PC-9 (cell line): ENCODE measurements at regions of chr9 and their contacts with region 1.

Region 1: DNA sequence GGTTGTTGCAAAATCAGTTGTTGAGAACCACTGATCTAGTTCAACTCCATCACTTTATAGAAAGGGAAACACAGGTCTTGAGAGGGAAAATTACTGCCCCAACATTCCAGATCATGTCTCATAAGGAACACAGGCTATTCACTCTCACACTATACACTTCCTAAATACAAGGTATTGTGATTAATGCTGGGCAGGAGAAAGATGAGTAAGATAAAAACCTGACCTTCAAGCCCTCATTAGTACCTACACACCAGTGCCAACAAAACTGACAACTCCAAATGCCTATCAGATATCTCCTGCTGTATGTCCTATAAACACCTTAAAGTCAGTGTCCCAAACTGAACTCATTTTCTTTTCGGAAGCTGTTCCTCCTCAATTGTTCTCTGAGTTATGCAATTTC is 8.2 kb downstream of the GNE start:
- DNase-seq: peak in 1 of 2 experiments; percentile 38
- H3K4me3 ChIP-seq: no peak overlapping the region
- H3K27ac ChIP-seq: no peak overlapping the region
- H3K4me1 ChIP-seq: 0 out of 2 replicates have a peak, but pooled peaks cover 6% of the 10 kb centered on the region
- H3K27me3 ChIP-seq: no peaks in the 10 kb centered on the region
- CTCF ChIP-seq: no peak

Region 2: GRCh38 chr9:36328798-36329411 is 78.8 kb after region 1 on chr9:
- CTCF ChIA-PET with region 1: no interaction called
- POLR2A ChIA-PET with region 1: no interaction called
- intact Hi-C with region 1: loop called (anchors 1 kb)
- DNase-seq: peak; percentile 29 to 65
- H3K4me3 ChIP-seq: no peak overlapping the region
- H3K27ac ChIP-seq: no peak overlapping the region
- H3K4me1 ChIP-seq: peaks cover 17% of the 10 kb centered on the region
- H3K27me3 ChIP-seq: no peaks in the 10 kb centered on the region
- CTCF ChIP-seq: peak; percentile 88

Region 3: DNA sequence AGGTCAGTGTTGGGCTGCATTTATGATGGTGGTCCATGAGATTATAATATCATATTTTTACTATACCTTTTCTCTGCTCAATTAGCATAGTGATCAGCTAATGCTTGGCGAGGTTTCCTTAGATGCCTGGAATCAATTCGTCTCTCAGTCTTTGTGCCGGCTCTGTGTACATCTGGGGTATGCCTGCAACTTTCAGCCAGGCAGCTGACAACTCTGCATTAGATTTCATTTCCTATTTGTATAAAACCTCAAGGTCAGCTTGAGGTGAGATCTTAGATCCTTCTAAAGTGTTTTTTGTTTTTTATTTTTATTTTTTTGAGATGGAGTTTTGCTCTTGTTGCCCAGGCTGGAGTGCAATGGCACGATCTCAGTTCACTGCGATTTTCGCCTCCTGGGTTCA is 409.4 kb after region 1 on chr9:
- CTCF ChIA-PET with region 1: no interaction called
- POLR2A ChIA-PET with region 1: no interaction called
- intact Hi-C with region 1: loop called (anchors 10 kb)
- DNase-seq: no peak
- H3K4me3 ChIP-seq: no peak overlapping the region
- H3K27ac ChIP-seq: no peak overlapping the region
- H3K4me1 ChIP-seq: no peaks in the 10 kb centered on the region
- H3K27me3 ChIP-seq: no peaks in the 10 kb centered on the region
- CTCF ChIP-seq: no peak